Breast epithelium (tissue), 4 donors: ENCODE measurements at regions of chr1 and their contacts with region 1.

Region 1: DNA sequence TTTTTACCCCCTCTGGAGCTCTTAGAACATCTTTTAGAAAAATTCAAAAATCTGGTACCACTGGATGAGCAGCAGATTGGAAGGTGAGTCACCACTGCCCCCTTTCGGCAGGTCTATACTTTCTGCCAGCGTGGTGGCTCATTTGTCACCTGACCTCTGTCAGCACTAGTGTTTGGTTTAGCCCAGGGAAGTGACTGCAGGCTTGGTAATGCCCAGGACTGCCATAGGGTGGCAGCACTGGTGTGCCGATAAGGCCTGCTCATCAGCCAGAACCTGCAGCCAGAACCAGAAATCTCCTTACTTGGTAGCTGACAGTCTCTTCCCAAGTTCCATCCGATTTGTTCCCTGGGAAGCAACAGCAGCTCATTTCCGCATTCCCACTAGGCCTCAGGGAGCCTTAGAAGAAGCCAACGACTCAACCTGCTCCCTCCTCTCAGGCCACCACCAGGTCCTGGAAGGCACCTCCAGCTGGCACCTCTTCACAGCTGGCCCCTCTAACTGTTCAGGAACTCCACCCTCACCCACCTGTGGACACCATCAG is 6.8 kb downstream of the SMIM12 start:
- DNase-seq: peak; percentile 76 to 89
- H3K4me3 ChIP-seq: no peak overlapping the region
- H3K27ac ChIP-seq: peak overlapping the region; percentile 17 to 45
- H3K4me1 ChIP-seq: peaks cover 0 to 5% of the 10 kb centered on the region in 2 donors
- H3K27me3 ChIP-seq: no peaks in the 10 kb centered on the region
- CTCF ChIP-seq: peak; percentile 83 to 97 (median 89)
- POLR2A ChIP-seq: no peak

Region 2: GRCh38 chr1:34796990-34797389 is 55.8 kb before region 1 on chr1:
- intact Hi-C with region 1: loop called (anchors 10 kb)
- DNase-seq: no peak
- H3K4me3 ChIP-seq: peak overlapping the region; percentile 18 to 64 (median 41)
- H3K27ac ChIP-seq: peak overlapping the region in 1 of 2 donors; percentile 12
- H3K4me1 ChIP-seq: no peaks in the 10 kb centered on the region
- H3K27me3 ChIP-seq: no peaks in the 10 kb centered on the region
- CTCF ChIP-seq: no peak
- POLR2A ChIP-seq: no peak

Region 3: GRCh38 chr1:34816778-34817177 is 36.0 kb before region 1 on chr1:
- intact Hi-C with region 1: loop called (anchors 1 kb)
- DNase-seq: no peak
- H3K4me3 ChIP-seq: no peak overlapping the region
- H3K27ac ChIP-seq: no peak overlapping the region
- H3K4me1 ChIP-seq: no peaks in the 10 kb centered on the region
- H3K27me3 ChIP-seq: no peaks in the 10 kb centered on the region
- CTCF ChIP-seq: no peak
- POLR2A ChIP-seq: no peak

Region 4: GRCh38 chr1:36722871-36723270 is 1870.1 kb after region 1 on chr1:
- intact Hi-C with region 1: no loop called
- DNase-seq: no peak
- H3K4me3 ChIP-seq: no peak overlapping the region
- H3K27ac ChIP-seq: no peak overlapping the region
- H3K4me1 ChIP-seq: no peaks in the 10 kb centered on the region
- H3K27me3 ChIP-seq: peaks cover 0 to 22% of the 10 kb centered on the region in 2 donors
- CTCF ChIP-seq: no peak
- POLR2A ChIP-seq: no peak